Gastrocnemius medialis (tissue), 4 donors: ENCODE measurements at regions of chr17 and their contacts with region 1.

Region 1: GRCh38 chr17:83058266-83058798 is 21.1 kb upstream of the METRNL start:
- DNase-seq: peak; percentile 66 to 79
- ATAC-seq: peak; percentile 52 to 63
- H3K4me3 ChIP-seq: no peak overlapping the region
- H3K27ac ChIP-seq: peak overlapping the region in 2 of 4 donors; percentile 18 to 75
- H3K4me1 ChIP-seq: peaks cover 17 to 24% of the 10 kb centered on the region in 2 donors
- H3K27me3 ChIP-seq: no peaks in the 10 kb centered on the region
- CTCF ChIP-seq: no peak
- POLR2A ChIP-seq: no peak

Region 2: GRCh38 chr17:83079352-83079747 is 21.0 kb after region 1 on chr17 and contains the start of gene METRNL:
- in situ Hi-C with region 1: no loop called
- intact Hi-C with region 1: loop called (anchors 2 kb)
- DNase-seq: peak in 1 of 2 donors; percentile 58
- ATAC-seq: peak; percentile 70 to 72
- H3K4me3 ChIP-seq: peak within 1 kb of the TSS; percentile 59 to 81 (median 71)
- H3K27ac ChIP-seq: peak within 1 kb of the TSS; percentile 39 to 64 (median 57)
- H3K4me1 ChIP-seq: peaks cover 3 to 10% of the 10 kb centered on the region in 2 donors
- H3K27me3 ChIP-seq: peaks cover 9 to 13% (median 13%) of the 10 kb centered on the region in 3 donors
- CTCF ChIP-seq: no peak
- POLR2A ChIP-seq: peak; percentile 63 to 70
- total RNA-seq, gene METRNL: 6.6 to 19.7 (median 11.1) TPM